ENCODE measurements at regions of chr14 and their contacts with region 1.

Region 1: GRCh38 chr14:58501214-58501816 is 73.8 kb downstream of the KIAA0586 start:
- DNase-seq: peak; percentile 21 to 80
- ATAC-seq: peak; percentile 86 to 90; a peak in 4 of 6 replicates
- H3K4me3 ChIP-seq: no peak overlapping the region
- H3K27ac ChIP-seq: no peak overlapping the region
- H3K4me1 ChIP-seq: no peaks in the 10 kb centered on the region
- CTCF ChIP-seq: peak; percentile 90
- EP300 ChIP-seq: no peak
- POLR2A ChIP-seq: no peak
- RAD21 ChIP-seq: peak; percentile 84 to 88

Region 2: DNA sequence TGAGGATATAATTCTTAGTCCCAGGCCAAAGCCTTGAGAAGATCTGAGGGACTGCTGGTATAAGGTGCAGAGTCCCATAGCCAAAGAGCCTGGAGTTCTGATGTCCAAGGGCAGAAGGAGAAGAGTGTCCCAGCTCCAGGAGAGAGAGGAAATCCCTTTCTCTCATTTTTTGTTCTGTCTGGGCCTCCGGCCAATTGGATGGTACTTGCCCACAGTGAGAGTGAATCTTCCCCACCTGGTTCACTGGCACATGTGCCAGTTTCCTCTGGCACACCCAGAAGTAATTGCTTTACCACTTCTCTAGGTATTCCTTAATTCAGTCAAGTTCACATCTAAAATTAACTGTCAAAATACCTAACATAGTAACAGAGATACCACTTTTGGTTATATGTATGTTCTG is 187.6 kb before region 1 on chr14:
- CTCF ChIA-PET with region 1: no interaction called
- POLR2A ChIA-PET with region 1: no interaction called
- DNase-seq: no peak
- ATAC-seq: no peak
- H3K4me3 ChIP-seq: no peak overlapping the region
- H3K27ac ChIP-seq: no peak overlapping the region
- H3K4me1 ChIP-seq: 0 out of 3 replicates have a peak, but pooled peaks cover 7% of the 10 kb centered on the region
- CTCF ChIP-seq: no peak
- EP300 ChIP-seq: no peak
- POLR2A ChIP-seq: no peak
- RAD21 ChIP-seq: no peak

Region 3: DNA sequence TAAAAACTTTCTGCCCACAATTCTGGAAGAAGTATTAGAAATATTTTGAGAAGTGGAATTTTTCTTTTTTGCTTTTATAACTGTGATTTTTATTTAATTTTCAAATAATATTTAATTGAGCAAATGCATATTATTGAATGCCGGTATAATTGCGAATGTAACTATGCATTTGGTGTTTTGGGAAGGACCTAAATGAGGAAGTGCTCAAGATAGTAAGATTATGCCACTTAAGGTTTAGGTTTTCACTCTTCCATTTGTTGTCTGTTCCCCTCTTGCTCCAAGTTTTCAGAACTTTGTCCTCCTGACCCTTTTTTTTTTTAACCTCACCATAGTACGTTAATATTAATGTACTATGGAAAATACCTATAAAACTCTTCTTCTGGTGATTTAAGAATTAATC is 12.0 kb after region 1 on chr14:
- CTCF ChIA-PET with region 1: interaction called, 16 read pairs
- POLR2A ChIA-PET with region 1: no interaction called
- DNase-seq: no peak
- ATAC-seq: no peak
- H3K4me3 ChIP-seq: no peak overlapping the region
- H3K27ac ChIP-seq: no peak overlapping the region
- H3K4me1 ChIP-seq: no peaks in the 10 kb centered on the region
- CTCF ChIP-seq: no peak
- EP300 ChIP-seq: no peak
- POLR2A ChIP-seq: no peak
- RAD21 ChIP-seq: no peak

Region 4: DNA sequence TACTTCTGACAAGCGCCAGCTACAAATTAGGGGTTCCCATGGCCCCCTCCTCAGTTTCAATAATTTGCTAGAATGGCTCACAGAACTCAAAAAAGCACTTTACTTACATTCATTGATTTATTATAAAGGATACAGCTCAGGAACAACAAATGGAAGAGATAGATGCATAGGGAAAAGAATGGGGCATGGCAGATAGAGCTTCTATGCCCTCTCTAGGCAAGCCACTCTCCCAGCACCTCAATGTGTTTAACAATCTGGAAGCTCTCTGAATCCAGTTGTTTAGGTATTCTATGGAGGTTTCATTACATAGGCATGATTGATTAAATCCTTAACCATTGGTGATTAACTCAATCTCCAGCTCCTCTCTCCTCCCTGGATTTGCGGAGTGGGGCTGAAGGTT is 502.7 kb after region 1 on chr14:
- CTCF ChIA-PET with region 1: interaction called, 12 read pairs
- POLR2A ChIA-PET with region 1: no interaction called
- DNase-seq: no peak
- ATAC-seq: no peak
- H3K4me3 ChIP-seq: no peak overlapping the region
- H3K27ac ChIP-seq: no peak overlapping the region
- H3K4me1 ChIP-seq: no peaks in the 10 kb centered on the region
- CTCF ChIP-seq: no peak
- EP300 ChIP-seq: no peak
- POLR2A ChIP-seq: no peak
- RAD21 ChIP-seq: peak; percentile 11 to 20; a peak in 3 of 5 replicates

Region 5: GRCh38 chr14:59028476-59029202 is 527.3 kb after region 1 on chr14:
- CTCF ChIA-PET with region 1: interaction called, 19 read pairs
- POLR2A ChIA-PET with region 1: no interaction called
- DNase-seq: peak; percentile 37 to 68
- ATAC-seq: peak; percentile 97 to 100
- H3K4me3 ChIP-seq: no peak overlapping the region
- H3K27ac ChIP-seq: no peak overlapping the region
- H3K4me1 ChIP-seq: peaks cover 5% of the 10 kb centered on the region; the same call in 1 of the 3 replicates
- CTCF ChIP-seq: peak; percentile 90
- EP300 ChIP-seq: no peak
- POLR2A ChIP-seq: no peak
- RAD21 ChIP-seq: peak; percentile 88 to 89

Region 6: DNA sequence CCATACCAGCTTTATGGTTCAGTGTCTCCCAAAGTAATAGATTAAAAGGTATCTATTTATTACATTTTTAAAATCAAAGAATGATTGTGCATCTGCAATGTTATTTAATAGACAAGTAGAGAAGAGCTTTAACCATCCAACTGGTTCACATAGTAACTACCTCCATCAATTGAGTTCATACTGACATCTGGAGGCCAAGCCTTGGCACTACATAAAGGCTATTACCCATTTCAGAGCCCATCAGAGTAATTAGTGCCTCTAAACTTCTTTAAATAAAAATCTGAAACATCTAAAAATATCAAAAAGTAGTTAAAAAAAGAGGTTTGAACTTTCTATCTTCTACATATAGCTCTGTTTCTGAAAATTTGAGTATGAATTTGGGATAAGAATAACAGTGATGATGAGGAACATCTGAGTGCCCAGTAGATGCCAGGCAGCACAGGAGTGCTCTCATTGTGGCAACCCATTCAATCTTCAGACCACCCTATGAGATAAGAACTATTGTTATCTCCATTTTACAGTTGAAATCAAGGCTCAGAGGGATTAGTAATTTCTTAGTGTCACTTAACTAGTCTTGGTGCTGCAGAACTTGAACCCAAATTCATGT is 554.2 kb after region 1 on chr14:
- CTCF ChIA-PET with region 1: interaction called, 12 read pairs
- POLR2A ChIA-PET with region 1: no interaction called
- DNase-seq: peak; percentile 21 to 28
- ATAC-seq: peak; percentile 59 to 80; a peak in 4 of 6 replicates
- H3K4me3 ChIP-seq: no peak overlapping the region
- H3K27ac ChIP-seq: no peak overlapping the region
- H3K4me1 ChIP-seq: no peaks in the 10 kb centered on the region
- CTCF ChIP-seq: peak; percentile 63
- EP300 ChIP-seq: no peak
- POLR2A ChIP-seq: no peak
- RAD21 ChIP-seq: peak; percentile 66 to 70